BJ (cell line): ENCODE measurements at regions of chr22 and their contacts with region 1.

Region 1: GRCh38 chr22:20885557-20886323 is 26.9 kb downstream of the SNAP29 start:
- DNase-seq: peak; percentile 12
- H3K4me3 ChIP-seq: no peak overlapping the region
- H3K27me3 ChIP-seq: no peaks in the 10 kb centered on the region
- CTCF ChIP-seq: peak; percentile 98

Region 2: DNA sequence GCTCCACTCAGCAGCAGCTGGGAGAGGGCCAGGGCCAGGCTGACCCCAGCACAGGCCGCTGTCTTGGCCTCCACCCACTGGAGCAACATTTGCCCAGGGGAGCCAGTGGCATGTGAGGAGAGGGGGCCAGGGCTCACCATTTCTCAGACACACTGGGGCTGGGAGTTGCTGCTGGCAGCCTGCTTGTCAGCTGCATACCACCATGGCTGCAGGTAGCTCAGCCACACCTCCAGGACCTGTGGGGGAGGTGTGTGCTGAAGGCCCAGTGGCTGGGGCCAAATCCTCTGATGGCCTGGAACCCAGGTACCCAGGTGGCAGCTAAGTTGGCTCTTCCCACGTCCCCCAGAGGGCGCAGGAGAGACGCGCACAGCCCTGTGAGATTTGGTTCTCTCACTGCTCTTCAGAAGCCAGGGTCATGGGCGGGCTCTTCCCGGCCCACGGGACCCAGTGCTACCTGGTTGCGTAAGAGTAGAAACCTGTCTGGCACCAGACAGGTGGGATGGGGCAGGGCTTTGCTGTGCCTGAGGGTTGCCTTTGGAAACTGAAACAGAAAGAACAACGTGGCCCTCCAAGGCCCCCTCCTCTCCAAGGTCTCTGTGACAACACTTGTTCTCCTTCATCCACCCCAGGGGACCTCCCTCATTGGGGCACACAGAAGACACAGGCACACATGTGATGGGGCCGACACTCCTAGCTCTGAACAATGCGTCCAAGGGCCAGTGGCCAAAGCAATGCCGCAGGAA is 279.5 kb before region 1 on chr22:
- CTCF ChIA-PET with region 1: no interaction called
- POLR2A ChIA-PET with region 1: no interaction called
- DNase-seq: no peak
- H3K4me3 ChIP-seq: no peak overlapping the region
- H3K27me3 ChIP-seq: peaks cover 13% of the 10 kb centered on the region
- CTCF ChIP-seq: peak; percentile 73

Region 3: GRCh38 chr22:20793748-20794637 is 91.7 kb before region 1 on chr22:
- CTCF ChIA-PET with region 1: interaction called, 10 read pairs
- POLR2A ChIA-PET with region 1: no interaction called
- DNase-seq: no peak
- H3K4me3 ChIP-seq: no peak overlapping the region
- H3K27me3 ChIP-seq: no peaks in the 10 kb centered on the region
- CTCF ChIP-seq: no peak

Region 4: DNA sequence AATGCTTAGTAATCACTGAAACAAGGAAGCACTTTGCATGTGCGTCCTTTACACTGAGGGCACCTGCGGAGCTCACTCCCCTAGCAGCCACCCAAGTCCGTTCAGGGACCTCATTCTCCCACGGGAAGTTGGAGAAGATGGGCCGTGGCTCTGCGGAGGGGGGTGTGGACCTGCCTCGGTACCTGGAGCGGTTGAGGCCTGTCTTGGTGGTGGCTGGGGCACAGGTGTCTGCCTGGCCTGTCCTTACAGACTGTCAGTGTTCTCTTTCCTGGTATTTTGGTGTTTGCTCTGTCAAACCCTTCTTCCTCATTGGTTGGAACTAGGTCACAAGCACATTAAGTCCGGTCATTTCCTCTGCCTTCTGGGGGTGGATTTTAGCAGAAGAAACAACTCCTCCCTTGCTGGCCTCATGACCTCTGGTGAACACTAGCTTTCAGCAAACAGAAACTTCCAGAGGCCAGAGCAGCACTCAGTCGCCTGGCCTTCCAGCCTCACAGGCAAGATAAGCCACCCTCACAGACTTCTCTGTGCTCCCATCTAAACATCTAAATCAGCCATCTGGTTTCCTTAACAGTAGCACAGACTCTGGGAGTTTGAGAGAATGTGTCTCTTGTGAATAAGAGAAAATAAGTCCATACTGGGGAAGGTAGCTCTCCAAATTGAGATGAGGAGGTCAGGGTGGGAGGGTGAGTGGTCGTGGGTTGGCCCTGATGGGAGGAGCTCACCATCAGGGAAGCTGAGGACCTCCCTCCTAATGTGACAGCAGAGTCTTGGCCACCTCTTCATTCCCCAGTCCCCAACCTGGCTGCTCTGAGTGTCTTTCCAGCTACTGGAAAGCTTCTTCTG is 18.3 kb before region 1 on chr22:
- CTCF ChIA-PET with region 1: interaction called, 11 read pairs
- POLR2A ChIA-PET with region 1: interaction called, 8 read pairs
- DNase-seq: no peak
- H3K4me3 ChIP-seq: no peak overlapping the region
- H3K27me3 ChIP-seq: no peaks in the 10 kb centered on the region
- CTCF ChIP-seq: no peak

Region 5: GRCh38 chr22:20904008-20904979 is 18.6 kb after region 1 on chr22:
- CTCF ChIA-PET with region 1: interaction called, 18 read pairs
- POLR2A ChIA-PET with region 1: interaction called, 7 read pairs
- DNase-seq: peak; percentile 85
- H3K4me3 ChIP-seq: no peak overlapping the region
- H3K27me3 ChIP-seq: no peaks in the 10 kb centered on the region
- CTCF ChIP-seq: no peak

Region 6: GRCh38 chr22:20957316-20958101 is 71.8 kb after region 1 on chr22:
- CTCF ChIA-PET with region 1: interaction called, 36 read pairs
- POLR2A ChIA-PET with region 1: interaction called, 9 read pairs
- DNase-seq: no peak
- H3K4me3 ChIP-seq: peak overlapping the region; percentile 63
- H3K27me3 ChIP-seq: no peaks in the 10 kb centered on the region
- CTCF ChIP-seq: 0 out of 2 replicates have a peak, but pooled peaks have one; percentile 3